Ovary (tissue), 10 donors: ENCODE measurements at regions of chr6 and their contacts with region 1.

Region 1: GRCh38 chr6:56292505-56293181 is 45.3 kb upstream of the COL21A1 start:
- DNase-seq: peak in 1 of 5 donors; percentile 27
- H3K4me3 ChIP-seq: no peak overlapping the region
- H3K27ac ChIP-seq: no peak overlapping the region
- H3K4me1 ChIP-seq: peaks cover 2% of the 10 kb centered on the region
- H3K27me3 ChIP-seq: no peaks in the 10 kb centered on the region
- CTCF ChIP-seq: peak in 2 of 3 donors; percentile 47 to 58
- EP300 ChIP-seq: no peak
- POLR2A ChIP-seq: no peak

Region 2: GRCh38 chr6:55456016-55456415 is 836.6 kb before region 1 on chr6:
- intact Hi-C with region 1: no loop called
- DNase-seq: no peak
- H3K4me3 ChIP-seq: no peak overlapping the region
- H3K27ac ChIP-seq: no peak overlapping the region
- H3K4me1 ChIP-seq: no peaks in the 10 kb centered on the region
- H3K27me3 ChIP-seq: no peaks in the 10 kb centered on the region
- CTCF ChIP-seq: no peak
- EP300 ChIP-seq: no peak
- POLR2A ChIP-seq: no peak

Region 3: GRCh38 chr6:55980627-55981211 is 311.9 kb before region 1 on chr6:
- intact Hi-C with region 1: loop called (anchors 5 to 10 kb)
- DNase-seq: peak in 1 of 5 donors; percentile 26
- H3K4me3 ChIP-seq: no peak overlapping the region
- H3K27ac ChIP-seq: no peak overlapping the region
- H3K4me1 ChIP-seq: no peaks in the 10 kb centered on the region
- H3K27me3 ChIP-seq: no peaks in the 10 kb centered on the region
- CTCF ChIP-seq: peak in 2 of 3 donors; percentile 47 to 73
- EP300 ChIP-seq: no peak
- POLR2A ChIP-seq: no peak